Naive thymus-derived CD4-positive, alpha-beta T cell (primary cell): ENCODE measurements at regions of chr5 and their contacts with region 1.

Region 1: DNA sequence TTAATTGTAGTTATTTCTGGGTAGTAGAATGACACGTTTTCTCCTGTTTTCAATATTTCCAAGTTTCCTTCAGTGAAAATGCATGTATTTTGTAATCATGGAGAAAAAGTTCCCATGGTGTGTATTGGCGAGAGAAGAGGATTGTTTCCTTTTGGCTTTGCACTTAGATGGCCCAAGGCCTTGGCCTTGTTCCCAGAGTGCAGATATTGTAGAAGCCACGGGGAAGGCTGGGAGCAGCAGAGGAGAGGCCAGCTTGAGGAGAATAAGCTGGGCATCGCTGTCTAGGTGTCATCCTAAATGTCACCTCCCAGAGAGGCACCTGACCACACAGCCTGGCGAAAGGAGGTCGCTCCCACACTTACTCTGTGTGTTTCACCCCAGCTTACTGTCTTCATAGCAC is 43.9 kb downstream of the IRF1 start:
- DNase-seq: no peak
- ATAC-seq: no peak
- H3K4me3 ChIP-seq: peak overlapping the region; percentile 3
- H3K4me3 Mint-ChIP-seq: peak overlapping the region in 8 of 10 donors; percentile 30 to 71 (median 61)
- H3K27ac ChIP-seq: no peak overlapping the region
- H3K27ac Mint-ChIP-seq: peak overlapping the region in 8 of 9 donors; percentile 64 to 94 (median 79)
- H3K4me1 ChIP-seq: peaks cover 54 to 76% of the 10 kb centered on the region in 2 donors
- H3K4me1 Mint-ChIP-seq: peaks cover 52 to 93% (median 76%) of the 10 kb centered on the region in 7 donors
- H3K27me3 ChIP-seq: no peaks in the 10 kb centered on the region
- H3K27me3 Mint-ChIP-seq: no peaks in the 10 kb centered on the region

Region 2: DNA sequence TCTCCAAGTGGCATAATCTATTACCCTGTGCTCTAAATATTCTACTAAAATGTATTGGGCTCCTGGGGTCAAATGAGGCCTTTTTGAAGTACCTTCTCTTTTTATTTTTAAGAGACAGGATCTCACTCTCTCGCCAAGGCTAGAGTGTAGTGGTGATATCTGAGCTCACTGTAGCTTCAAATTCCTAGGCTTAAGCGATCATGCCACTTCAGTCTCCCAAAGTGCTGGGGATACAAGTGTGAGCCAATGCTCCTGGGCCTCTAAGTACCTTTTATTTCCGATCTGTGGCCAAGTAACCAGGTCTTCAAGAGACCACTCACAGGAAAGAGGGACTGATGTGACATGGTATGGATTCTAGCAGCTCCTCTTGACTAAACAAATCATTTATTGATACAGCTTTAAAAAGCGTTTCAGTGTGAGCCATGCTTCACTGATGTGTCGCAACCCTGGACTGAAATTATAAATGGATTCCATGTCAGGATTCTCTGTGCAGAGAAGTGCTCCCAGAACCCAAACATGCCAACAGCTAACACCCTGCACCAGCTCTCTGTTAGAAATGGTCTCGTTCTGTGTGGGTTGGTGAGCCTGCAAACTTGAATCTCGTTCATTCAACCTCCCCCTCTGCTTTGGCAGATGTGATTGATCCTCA is 1759.5 kb before region 1 on chr5:
- CTCF ChIA-PET with region 1: no interaction called
- POLR2A ChIA-PET with region 1: no interaction called
- intact Hi-C with region 1: no loop called
- DNase-seq: no peak
- ATAC-seq: no peak
- H3K4me3 ChIP-seq: no peak overlapping the region
- H3K4me3 Mint-ChIP-seq: no peak overlapping the region
- H3K27ac ChIP-seq: no peak overlapping the region
- H3K27ac Mint-ChIP-seq: no peak overlapping the region
- H3K4me1 ChIP-seq: no peaks in the 10 kb centered on the region
- H3K4me1 Mint-ChIP-seq: peaks cover 0 to 4% (median 0%) of the 10 kb centered on the region in 7 donors
- H3K27me3 ChIP-seq: no peaks in the 10 kb centered on the region
- H3K27me3 Mint-ChIP-seq: peaks cover 13 to 40% (median 27%) of the 10 kb centered on the region in 5 donors

Region 3: DNA sequence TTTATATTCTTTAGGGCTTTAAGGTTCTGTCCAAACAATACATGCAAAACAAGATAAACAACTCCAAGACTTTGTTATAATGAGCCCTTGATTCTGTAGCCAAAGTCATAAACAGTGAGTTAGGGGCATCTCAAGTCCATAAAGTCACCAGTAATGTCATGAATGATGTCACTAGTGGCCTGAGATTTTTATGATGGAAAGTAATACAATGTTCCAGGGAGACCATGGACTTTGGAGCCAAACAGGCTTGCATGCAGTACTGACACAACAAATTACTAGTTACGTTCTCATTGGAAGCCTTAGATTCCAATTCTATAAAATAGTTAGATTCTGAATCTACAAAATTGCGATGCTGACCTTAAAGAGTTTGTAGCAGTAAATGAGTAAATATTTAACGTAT is 1561.6 kb before region 1 on chr5:
- CTCF ChIA-PET with region 1: no interaction called
- POLR2A ChIA-PET with region 1: no interaction called
- intact Hi-C with region 1: no loop called
- DNase-seq: no peak
- ATAC-seq: no peak
- H3K4me3 ChIP-seq: no peak overlapping the region
- H3K4me3 Mint-ChIP-seq: no peak overlapping the region
- H3K27ac ChIP-seq: no peak overlapping the region
- H3K27ac Mint-ChIP-seq: no peak overlapping the region
- H3K4me1 ChIP-seq: no peaks in the 10 kb centered on the region
- H3K4me1 Mint-ChIP-seq: peaks cover 0 to 12% (median 8%) of the 10 kb centered on the region in 7 donors
- H3K27me3 ChIP-seq: no peaks in the 10 kb centered on the region
- H3K27me3 Mint-ChIP-seq: peaks cover 0 to 9% (median 5%) of the 10 kb centered on the region in 5 donors

Region 4: GRCh38 chr5:132431632-132432031 is 15.0 kb before region 1 on chr5:
- CTCF ChIA-PET with region 1: interaction called, 7 read pairs
- POLR2A ChIA-PET with region 1: interaction called, 12 read pairs
- intact Hi-C with region 1: no loop called
- DNase-seq: no peak
- ATAC-seq: no peak
- H3K4me3 ChIP-seq: no peak overlapping the region
- H3K4me3 Mint-ChIP-seq: peak overlapping the region in 9 of 10 donors; percentile 0 to 79 (median 51)
- H3K27ac ChIP-seq: peak overlapping the region; percentile 17
- H3K27ac Mint-ChIP-seq: peak overlapping the region; percentile 59 to 99 (median 96)
- H3K4me1 ChIP-seq: peaks cover 76 to 91% of the 10 kb centered on the region in 2 donors
- H3K4me1 Mint-ChIP-seq: peaks cover 76 to 97% (median 95%) of the 10 kb centered on the region in 7 donors
- H3K27me3 ChIP-seq: no peaks in the 10 kb centered on the region
- H3K27me3 Mint-ChIP-seq: no peaks in the 10 kb centered on the region